ENCODE measurements at regions of chr10 and their contacts with region 1.

Region 1: GRCh38 chr10:128047351-128047750 is 78.9 kb downstream of the MKI67 start:
- DNase-seq: peak; percentile 93
- H3K4me3 Mint-ChIP-seq: peak overlapping the region; percentile 93
- H3K27ac Mint-ChIP-seq: peak overlapping the region; percentile 99
- H3K4me1 Mint-ChIP-seq: peaks cover 54% of the 10 kb centered on the region
- H3K27me3 Mint-ChIP-seq: no peaks in the 10 kb centered on the region

Region 2: GRCh38 chr10:127906548-127907377 is 140.6 kb before region 1 on chr10 and contains the start of gene PTPRE:
- CTCF ChIA-PET with region 1: interaction called, 12 read pairs
- POLR2A ChIA-PET with region 1: no interaction called
- intact Hi-C with region 1: no loop called
- DNase-seq: peak; percentile 78
- H3K4me3 Mint-ChIP-seq: peak within 1 kb of the TSS; percentile 25
- H3K27ac Mint-ChIP-seq: no peak within 1 kb of the TSS
- H3K4me1 Mint-ChIP-seq: no peaks in the 10 kb centered on the region
- H3K27me3 Mint-ChIP-seq: peaks cover 27% of the 10 kb centered on the region
- total RNA-seq, gene PTPRE: 29.4 to 34.0 TPM

Region 3: DNA sequence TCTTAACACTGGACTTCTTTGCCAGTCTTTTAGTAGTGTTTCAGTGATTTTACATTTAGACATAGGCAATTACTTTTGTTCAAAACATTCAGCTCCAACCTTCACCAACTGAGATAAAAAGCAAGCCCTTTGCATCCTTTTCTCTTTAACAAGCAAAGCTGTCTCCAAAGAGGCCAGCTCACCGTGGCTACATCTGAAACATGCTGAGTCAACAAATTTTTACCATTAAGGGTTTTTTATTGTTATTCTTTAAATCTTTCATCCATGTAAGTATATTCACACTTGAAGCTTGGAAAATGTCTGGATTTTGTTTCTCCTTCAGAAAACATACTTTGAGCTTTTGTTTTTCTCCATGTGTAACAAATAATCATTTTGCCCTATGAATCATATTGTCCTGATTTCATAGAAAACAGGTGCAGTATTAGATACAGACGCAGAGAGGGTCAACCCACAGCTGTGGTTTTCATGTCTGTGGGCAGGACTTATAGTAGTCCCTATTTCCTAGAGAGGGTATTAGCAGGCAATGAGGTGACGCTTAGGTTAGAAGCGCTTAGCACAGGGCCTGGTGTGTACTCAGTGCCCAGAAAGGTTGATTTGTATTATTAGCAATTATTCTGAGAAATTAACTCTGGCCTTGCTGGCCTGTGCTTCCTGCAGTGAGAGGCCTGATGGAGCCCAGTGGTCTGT is 20.6 kb before region 1 on chr10:
- CTCF ChIA-PET with region 1: interaction called, 15 read pairs
- POLR2A ChIA-PET with region 1: interaction called, 11 read pairs
- intact Hi-C with region 1: no loop called
- DNase-seq: peak; percentile 70
- H3K4me3 Mint-ChIP-seq: no peak overlapping the region
- H3K27ac Mint-ChIP-seq: peak overlapping the region; percentile 87
- H3K4me1 Mint-ChIP-seq: peaks cover 30% of the 10 kb centered on the region
- H3K27me3 Mint-ChIP-seq: peaks cover 3% of the 10 kb centered on the region

Region 4: DNA sequence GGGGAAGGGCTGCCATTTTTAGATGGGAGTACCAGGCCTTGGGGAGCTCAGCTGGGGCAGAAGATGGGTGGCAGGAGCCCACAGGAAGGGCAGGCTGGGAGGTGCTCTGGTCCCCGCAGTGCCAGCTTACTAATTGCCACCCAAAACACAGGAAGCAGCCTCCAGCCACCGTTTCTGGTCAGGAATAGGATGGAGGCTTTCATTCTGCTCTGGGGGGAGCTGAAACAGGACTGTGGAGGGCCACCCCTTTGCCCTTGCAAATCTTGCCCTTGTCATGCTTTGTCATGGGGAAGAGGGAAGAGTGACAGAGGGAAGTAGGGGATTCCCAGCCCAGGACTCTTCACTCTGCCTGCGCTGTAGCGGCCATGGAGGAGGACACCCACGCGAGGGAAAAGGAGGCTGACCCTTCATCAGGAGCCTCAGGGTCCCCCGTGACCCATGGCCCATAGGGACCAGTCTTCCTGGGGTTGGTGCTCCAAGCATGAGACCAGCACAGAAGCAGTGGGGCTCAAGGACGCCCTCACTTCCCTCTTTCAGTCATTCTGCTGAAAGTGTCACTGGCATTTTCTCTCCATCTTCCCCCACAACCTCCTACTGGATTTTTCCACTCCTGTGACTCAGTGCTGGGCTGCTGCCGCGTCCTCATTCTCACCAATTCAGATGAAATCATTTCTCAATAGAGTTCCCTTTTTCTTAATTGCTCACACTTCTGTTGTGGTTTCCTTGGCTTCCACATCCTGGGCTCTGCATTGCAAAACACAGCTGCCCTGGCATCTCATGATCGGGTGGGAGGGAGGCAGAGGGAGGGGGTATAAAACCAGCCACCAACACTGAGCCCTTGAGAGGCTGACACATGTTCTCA is 17.0 kb after region 1 on chr10:
- CTCF ChIA-PET with region 1: interaction called, 60 read pairs
- POLR2A ChIA-PET with region 1: interaction called, 135 read pairs
- intact Hi-C with region 1: loop called (anchors 1 kb)
- DNase-seq: peak; percentile 91
- H3K4me3 Mint-ChIP-seq: peak overlapping the region; percentile 59
- H3K27ac Mint-ChIP-seq: peak overlapping the region; percentile 96
- H3K4me1 Mint-ChIP-seq: peaks cover 58% of the 10 kb centered on the region
- H3K27me3 Mint-ChIP-seq: no peaks in the 10 kb centered on the region

Region 5: GRCh38 chr10:128084364-128084763 is 37.0 kb after region 1 on chr10:
- CTCF ChIA-PET with region 1: no interaction called
- POLR2A ChIA-PET with region 1: no interaction called
- intact Hi-C with region 1: no loop called
- DNase-seq: no peak
- H3K4me3 Mint-ChIP-seq: no peak overlapping the region
- H3K27ac Mint-ChIP-seq: no peak overlapping the region
- H3K4me1 Mint-ChIP-seq: peaks cover 6% of the 10 kb centered on the region
- H3K27me3 Mint-ChIP-seq: no peaks in the 10 kb centered on the region

Region 6: DNA sequence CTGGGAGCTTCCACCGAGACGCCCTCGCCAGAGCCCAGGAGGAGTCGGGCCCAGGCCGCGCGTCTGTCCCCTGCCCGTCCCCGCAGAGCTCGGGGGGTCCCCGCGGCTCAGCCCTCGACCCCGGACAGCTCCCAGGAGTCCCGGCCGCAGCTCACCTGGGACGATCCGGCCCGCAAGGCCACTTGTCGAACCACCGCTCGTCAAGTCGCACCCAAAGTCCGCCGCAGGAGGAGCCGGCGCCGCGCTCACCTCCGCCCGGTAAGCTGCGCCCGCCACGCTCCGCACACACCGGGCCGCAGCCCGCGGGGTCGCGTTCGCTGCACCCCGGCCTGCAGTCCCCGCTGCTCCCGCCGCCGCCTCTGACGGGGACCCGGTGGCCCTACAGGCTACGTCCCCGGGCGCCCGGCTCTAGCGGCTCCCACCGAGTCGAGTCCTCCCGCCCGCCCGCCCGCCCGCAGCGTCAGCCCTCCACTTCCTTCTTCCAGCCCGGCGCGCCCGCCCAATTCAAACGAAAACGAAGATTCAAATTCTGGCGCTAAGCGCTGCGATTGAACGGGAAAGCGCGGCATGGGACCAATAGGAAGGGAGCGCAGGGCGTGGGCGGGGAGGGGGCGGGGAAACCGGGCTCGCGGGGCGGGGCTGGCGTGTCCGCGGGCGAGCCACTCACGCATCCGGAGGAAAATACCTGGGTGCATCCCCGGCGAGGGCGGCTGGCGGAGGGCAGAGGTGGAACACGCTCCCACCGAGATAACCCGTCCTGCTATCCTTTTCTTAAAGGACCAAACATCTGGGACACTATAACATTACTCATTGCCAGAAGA is 78.8 kb after region 1 on chr10 and contains the start of gene MKI67:
- CTCF ChIA-PET with region 1: interaction called, 4 read pairs
- POLR2A ChIA-PET with region 1: interaction called, 10 read pairs
- intact Hi-C with region 1: loop called (anchors 1 kb)
- DNase-seq: peak; percentile 95
- H3K4me3 Mint-ChIP-seq: peak within 1 kb of the TSS; percentile 96
- H3K27ac Mint-ChIP-seq: peak within 1 kb of the TSS; percentile 90
- H3K4me1 Mint-ChIP-seq: peaks cover 24% of the 10 kb centered on the region
- H3K27me3 Mint-ChIP-seq: peaks cover 19% of the 10 kb centered on the region
- total RNA-seq, gene MKI67: 223 to 241 TPM

Region 7: GRCh38 chr10:129244757-129245156 is 1197.4 kb after region 1 on chr10:
- CTCF ChIA-PET with region 1: no interaction called
- POLR2A ChIA-PET with region 1: no interaction called
- intact Hi-C with region 1: no loop called
- DNase-seq: no peak
- H3K4me3 Mint-ChIP-seq: no peak overlapping the region
- H3K27ac Mint-ChIP-seq: no peak overlapping the region
- H3K4me1 Mint-ChIP-seq: no peaks in the 10 kb centered on the region
- H3K27me3 Mint-ChIP-seq: no peaks in the 10 kb centered on the region